PC-3 (cell line): ENCODE measurements at regions of chr2 and their contacts with region 1.

Region 1: GRCh38 chr2:183416753-183417152 is 292.5 kb downstream of the NUP35 start:
- DNase-seq: no peak
- ATAC-seq: no peak
- H3K4me3 ChIP-seq: no peak overlapping the region
- H3K27ac ChIP-seq: no peak overlapping the region
- H3K4me1 ChIP-seq: no peaks in the 10 kb centered on the region
- H3K27me3 ChIP-seq: no peaks in the 10 kb centered on the region
- CTCF ChIP-seq: no peak

Region 2: DNA sequence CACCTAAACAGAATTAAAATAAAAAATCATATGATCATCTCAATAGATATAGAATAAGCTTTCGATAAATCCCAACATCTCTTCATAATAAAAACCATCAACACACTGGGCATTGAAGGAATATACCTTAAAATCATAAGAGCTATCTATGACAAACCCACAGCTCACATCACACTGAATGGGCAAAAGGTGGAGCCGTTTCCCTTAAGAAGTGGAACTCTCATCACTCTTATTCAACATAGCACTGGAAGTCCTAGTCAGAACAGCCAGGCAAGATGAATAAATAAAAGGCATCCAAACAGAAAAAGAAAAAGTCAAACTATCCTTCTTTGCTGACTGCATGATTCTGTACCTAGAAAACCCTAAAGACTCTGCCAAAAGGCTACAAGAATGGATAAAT is 1691.8 kb after region 1 on chr2:
- CTCF ChIA-PET with region 1: no interaction called
- POLR2A ChIA-PET with region 1: no interaction called
- intact Hi-C with region 1: loop called (anchors 10 kb)
- DNase-seq: no peak
- ATAC-seq: peak; percentile 45; the same call in 1 of the 2 replicates
- H3K4me3 ChIP-seq: no peak overlapping the region
- H3K27ac ChIP-seq: no peak overlapping the region
- H3K4me1 ChIP-seq: no peaks in the 10 kb centered on the region
- H3K27me3 ChIP-seq: no peaks in the 10 kb centered on the region
- CTCF ChIP-seq: 0 out of 2 replicates have a peak, but pooled peaks have one; percentile 18